PC-9 (cell line): ENCODE measurements at regions of chr10 and their contacts with region 1.

Region 1: GRCh38 chr10:59240582-59241183 is 64.2 kb downstream of the PHYHIPL start:
- DNase-seq: peak in 1 of 2 experiments; percentile 4
- H3K4me3 ChIP-seq: no peak overlapping the region
- H3K27ac ChIP-seq: no peak overlapping the region
- H3K4me1 ChIP-seq: no peaks in the 10 kb centered on the region
- H3K27me3 ChIP-seq: no peaks in the 10 kb centered on the region
- CTCF ChIP-seq: peak; percentile 88

Region 2: DNA sequence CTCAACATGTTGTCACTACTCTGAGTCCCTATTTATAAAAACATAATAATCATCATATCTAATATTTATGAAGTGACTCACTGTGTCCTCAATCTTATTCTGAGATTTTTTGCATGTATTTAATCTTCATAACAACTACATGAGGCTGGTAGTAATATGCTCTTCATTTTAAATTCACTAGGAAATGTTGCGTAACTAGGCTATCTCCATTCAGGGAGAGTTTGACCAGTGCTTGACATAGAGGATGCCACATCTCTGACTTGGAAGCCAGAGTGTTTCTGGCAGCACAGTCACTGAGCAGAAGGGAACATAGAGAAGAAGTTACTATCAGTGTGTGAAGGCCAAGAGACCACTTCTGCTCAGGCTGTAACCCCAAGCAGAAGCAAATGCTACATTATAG is 32.8 kb after region 1 on chr10:
- CTCF ChIA-PET with region 1: no interaction called
- POLR2A ChIA-PET with region 1: no interaction called
- intact Hi-C with region 1: no loop called
- DNase-seq: no peak
- H3K4me3 ChIP-seq: no peak overlapping the region
- H3K27ac ChIP-seq: no peak overlapping the region
- H3K4me1 ChIP-seq: no peaks in the 10 kb centered on the region
- H3K27me3 ChIP-seq: no peaks in the 10 kb centered on the region
- CTCF ChIP-seq: no peak

Region 3: DNA sequence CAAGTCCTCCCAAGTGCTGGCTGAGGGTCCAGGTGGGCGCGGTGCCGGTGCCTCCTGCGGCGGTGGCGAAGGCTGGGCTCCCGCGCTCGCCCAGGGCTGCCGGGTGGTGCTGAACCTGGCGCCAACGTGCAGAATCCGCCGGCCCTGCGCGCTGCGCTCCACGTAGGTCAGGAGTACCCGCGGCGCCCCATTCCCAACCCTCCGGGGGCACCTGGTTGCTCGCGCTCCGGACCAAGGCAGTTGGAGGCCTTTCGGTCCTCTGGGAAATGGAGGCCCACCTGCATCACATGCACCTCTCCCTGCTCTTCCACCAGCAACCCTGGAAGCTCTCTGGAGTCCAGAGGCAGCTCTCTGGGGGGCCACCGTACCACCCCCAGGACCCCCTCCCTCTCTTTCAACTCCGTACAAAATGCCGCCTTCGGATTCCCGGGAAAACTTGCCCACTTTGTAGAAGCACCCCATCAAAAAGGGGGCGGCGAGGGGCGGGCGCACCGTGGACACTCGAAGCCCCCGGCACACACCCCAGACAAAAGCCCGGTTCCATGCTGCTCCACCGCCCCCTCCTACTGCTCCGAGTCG is 468.2 kb after region 1 on chr10:
- CTCF ChIA-PET with region 1: no interaction called
- POLR2A ChIA-PET with region 1: no interaction called
- intact Hi-C with region 1: no loop called
- DNase-seq: no peak
- H3K4me3 ChIP-seq: peak overlapping the region; percentile 49; the same call in 1 of the 2 replicates
- H3K27ac ChIP-seq: no peak overlapping the region
- H3K4me1 ChIP-seq: no peaks in the 10 kb centered on the region
- H3K27me3 ChIP-seq: peaks cover 6% of the 10 kb centered on the region
- CTCF ChIP-seq: no peak

Region 4: GRCh38 chr10:59808896-59809643 is 568.4 kb after region 1 on chr10:
- CTCF ChIA-PET with region 1: no interaction called
- POLR2A ChIA-PET with region 1: no interaction called
- intact Hi-C with region 1: loop called (anchors 10 kb)
- DNase-seq: peak; percentile 63 to 66
- H3K4me3 ChIP-seq: no peak overlapping the region
- H3K27ac ChIP-seq: no peak overlapping the region
- H3K4me1 ChIP-seq: no peaks in the 10 kb centered on the region
- H3K27me3 ChIP-seq: no peaks in the 10 kb centered on the region
- CTCF ChIP-seq: peak; percentile 85